ENCODE measurements at regions of chr15 and their contacts with region 1.

Region 1: GRCh38 chr15:94119923-94120775 is 111.2 kb upstream of the MCTP2 start:
- DNase-seq: peak; percentile 90
- H3K4me3 Mint-ChIP-seq: no peak overlapping the region
- H3K27ac Mint-ChIP-seq: peak overlapping the region; percentile 35
- H3K4me1 Mint-ChIP-seq: no peaks in the 10 kb centered on the region
- H3K27me3 Mint-ChIP-seq: no peaks in the 10 kb centered on the region
- CTCF ChIP-seq: peak; percentile 98

Region 2: DNA sequence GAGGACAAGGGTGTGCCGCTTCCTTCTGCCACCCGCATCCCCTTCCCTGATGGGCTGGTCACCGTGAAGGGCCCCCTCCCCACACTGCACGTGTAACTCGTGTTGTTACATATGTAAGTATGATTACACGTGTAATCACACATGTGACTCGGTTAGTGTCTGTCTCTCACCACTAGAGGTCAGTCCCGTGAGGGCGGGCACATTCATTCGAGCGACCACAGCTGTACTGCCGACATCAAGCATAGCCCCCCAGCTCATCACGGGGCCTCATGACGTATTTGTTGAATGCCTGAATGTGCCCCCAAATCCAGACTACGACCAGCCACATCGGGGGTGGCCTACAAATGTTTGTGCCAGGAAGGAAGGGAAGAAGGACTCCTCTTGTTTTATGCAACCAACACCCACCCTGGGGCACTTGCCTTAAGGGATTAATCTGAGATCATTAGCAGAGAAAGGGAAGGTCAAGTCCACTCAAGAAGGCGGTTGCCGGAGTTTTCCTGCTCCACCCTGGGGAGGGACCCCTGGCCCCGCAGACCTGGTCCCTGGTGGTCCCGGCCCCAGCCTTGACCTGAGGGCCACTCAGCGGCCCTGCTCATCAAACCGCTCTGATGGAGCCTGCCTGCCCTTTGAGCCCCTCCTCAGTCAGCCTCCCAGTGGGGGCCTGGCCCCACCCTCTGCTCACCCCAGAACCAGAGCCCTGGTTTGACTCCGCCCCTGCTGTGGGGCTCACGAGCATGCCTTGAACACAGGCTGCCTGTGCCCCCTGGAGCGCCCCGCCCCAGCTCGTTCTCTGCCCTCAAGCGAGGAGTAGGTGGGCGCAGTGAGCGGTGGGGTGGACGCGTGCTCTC is 1084.0 kb before region 1 on chr15:
- CTCF ChIA-PET with region 1: interaction called, 117 read pairs
- POLR2A ChIA-PET with region 1: interaction called, 3 read pairs
- intact Hi-C with region 1: no loop called
- DNase-seq: peak; percentile 59
- H3K4me3 Mint-ChIP-seq: no peak overlapping the region
- H3K27ac Mint-ChIP-seq: no peak overlapping the region
- H3K4me1 Mint-ChIP-seq: peaks cover 9% of the 10 kb centered on the region
- H3K27me3 Mint-ChIP-seq: no peaks in the 10 kb centered on the region
- CTCF ChIP-seq: peak; percentile 55

Region 3: GRCh38 chr15:93837450-93837849 is 282.7 kb before region 1 on chr15:
- CTCF ChIA-PET with region 1: interaction called, 10 read pairs
- POLR2A ChIA-PET with region 1: no interaction called
- intact Hi-C with region 1: no loop called
- DNase-seq: peak; percentile 92
- H3K4me3 Mint-ChIP-seq: peak overlapping the region; percentile 32
- H3K27ac Mint-ChIP-seq: peak overlapping the region; percentile 89
- H3K4me1 Mint-ChIP-seq: peaks cover 10% of the 10 kb centered on the region
- H3K27me3 Mint-ChIP-seq: no peaks in the 10 kb centered on the region
- CTCF ChIP-seq: no peak

Region 4: DNA sequence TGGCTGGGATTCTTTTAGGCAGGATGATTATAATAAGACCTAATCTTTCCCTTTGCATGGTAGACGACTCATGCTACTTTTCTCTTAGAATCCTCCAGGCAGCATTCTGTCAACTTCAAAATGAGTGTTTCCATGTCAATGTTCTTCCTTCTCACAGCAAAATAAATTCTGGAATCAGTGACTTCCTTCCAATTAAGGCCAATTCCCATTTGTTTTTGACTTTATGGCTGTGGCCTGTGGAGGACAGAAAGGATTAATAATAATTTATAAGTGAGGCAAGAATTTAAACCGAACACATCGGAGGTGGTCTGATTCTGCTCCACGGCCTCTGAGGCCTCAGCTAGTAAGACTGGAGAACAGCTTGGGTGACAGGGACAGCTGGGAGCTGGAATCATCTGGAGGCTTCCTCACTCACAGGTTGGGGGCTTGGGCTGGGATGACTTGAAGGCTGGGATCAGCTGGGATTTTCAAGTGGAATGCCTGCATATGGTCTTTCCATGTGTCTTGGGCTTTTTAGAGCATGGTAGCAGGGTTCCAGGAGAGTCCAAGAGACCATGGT is 130.6 kb before region 1 on chr15:
- CTCF ChIA-PET with region 1: interaction called, 20 read pairs
- POLR2A ChIA-PET with region 1: interaction called, 3 read pairs
- intact Hi-C with region 1: no loop called
- DNase-seq: no peak
- H3K4me3 Mint-ChIP-seq: no peak overlapping the region
- H3K27ac Mint-ChIP-seq: no peak overlapping the region
- H3K4me1 Mint-ChIP-seq: no peaks in the 10 kb centered on the region
- H3K27me3 Mint-ChIP-seq: no peaks in the 10 kb centered on the region
- CTCF ChIP-seq: no peak

Region 5: GRCh38 chr15:94021621-94022320 is 98.4 kb before region 1 on chr15:
- CTCF ChIA-PET with region 1: interaction called, 10 read pairs
- POLR2A ChIA-PET with region 1: no interaction called
- intact Hi-C with region 1: no loop called
- DNase-seq: no peak
- H3K4me3 Mint-ChIP-seq: no peak overlapping the region
- H3K27ac Mint-ChIP-seq: no peak overlapping the region
- H3K4me1 Mint-ChIP-seq: peaks cover 12% of the 10 kb centered on the region
- H3K27me3 Mint-ChIP-seq: no peaks in the 10 kb centered on the region
- CTCF ChIP-seq: no peak

Region 6: DNA sequence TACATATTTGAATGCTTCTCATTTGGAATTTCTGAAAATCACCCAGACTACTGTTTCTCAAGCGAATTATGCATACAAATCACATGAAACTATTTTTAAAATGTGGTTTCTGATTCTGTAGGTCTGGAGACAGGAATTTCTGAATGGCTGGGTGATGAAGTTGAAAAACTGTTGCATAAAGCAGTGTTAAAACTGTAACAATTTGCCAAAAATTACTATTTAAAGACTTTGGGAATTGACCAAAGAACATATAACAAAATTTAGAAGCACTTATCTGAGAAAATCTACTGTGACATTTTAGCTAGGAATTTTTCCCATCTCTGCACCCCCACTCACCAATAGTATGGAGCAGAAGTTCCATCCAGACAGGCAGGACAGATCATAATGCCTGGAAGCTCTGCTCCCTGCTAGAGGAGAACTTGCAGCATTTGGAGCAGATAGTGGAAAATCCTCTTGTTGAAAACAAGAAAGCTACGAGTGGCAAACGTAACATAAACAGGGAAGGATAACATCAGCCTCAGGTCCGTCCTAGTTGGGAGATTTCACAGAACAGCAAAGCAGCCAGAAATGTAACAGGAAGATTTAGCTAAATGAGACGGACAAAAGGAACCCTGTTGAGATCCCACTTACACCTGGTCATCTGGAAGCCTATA is 21.1 kb before region 1 on chr15:
- CTCF ChIA-PET with region 1: interaction called, 11 read pairs
- POLR2A ChIA-PET with region 1: no interaction called
- intact Hi-C with region 1: no loop called
- DNase-seq: no peak
- H3K4me3 Mint-ChIP-seq: no peak overlapping the region
- H3K27ac Mint-ChIP-seq: no peak overlapping the region
- H3K4me1 Mint-ChIP-seq: no peaks in the 10 kb centered on the region
- H3K27me3 Mint-ChIP-seq: no peaks in the 10 kb centered on the region
- CTCF ChIP-seq: no peak

Region 7: DNA sequence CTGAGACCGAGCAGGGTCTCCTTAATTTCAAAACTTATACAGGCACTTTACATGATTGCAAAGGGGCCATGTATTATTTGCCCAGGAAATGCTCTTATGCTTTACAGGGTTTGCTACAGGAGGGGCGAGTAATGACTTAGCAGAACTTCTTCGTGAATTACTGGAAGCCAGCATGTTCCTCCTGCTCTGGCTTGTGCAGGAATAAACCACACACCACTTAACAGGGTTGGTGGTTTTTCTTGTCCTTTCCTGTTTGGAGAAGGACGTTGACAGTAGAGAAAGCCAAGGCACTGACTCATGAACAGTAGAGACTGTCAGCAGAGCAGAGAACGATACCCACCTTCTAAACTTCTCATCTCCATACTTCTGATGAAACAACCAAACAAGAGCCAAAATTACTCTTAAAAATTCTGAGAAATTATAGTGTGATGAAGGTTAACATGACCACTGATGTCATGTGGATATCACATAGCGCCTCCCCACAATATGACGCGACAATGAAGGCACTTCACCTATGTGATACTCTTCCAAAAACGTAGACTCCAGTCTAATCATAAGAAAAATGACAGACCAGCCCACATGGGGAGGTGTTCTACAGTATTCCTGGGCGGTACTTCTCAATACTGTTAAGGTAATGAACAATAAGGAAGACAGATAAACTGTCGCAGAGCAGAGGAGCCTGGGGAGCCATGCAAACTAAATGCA is 86.5 kb after region 1 on chr15:
- CTCF ChIA-PET with region 1: no interaction called
- POLR2A ChIA-PET with region 1: no interaction called
- intact Hi-C with region 1: no loop called
- DNase-seq: peak; percentile 63
- H3K4me3 Mint-ChIP-seq: no peak overlapping the region
- H3K27ac Mint-ChIP-seq: no peak overlapping the region
- H3K4me1 Mint-ChIP-seq: no peaks in the 10 kb centered on the region
- H3K27me3 Mint-ChIP-seq: no peaks in the 10 kb centered on the region
- CTCF ChIP-seq: no peak

Measured in MCF 10A (cell line).